SK-N-SH (cell line): ENCODE measurements at regions of chr15 and their contacts with region 1.

Region 1: GRCh38 chr15:68672781-68673205 is 94.0 kb downstream of the CORO2B start:
- DNase-seq: no peak
- H3K4me3 ChIP-seq: no peak overlapping the region
- H3K27ac ChIP-seq: no peak overlapping the region
- H3K4me1 ChIP-seq: no peaks in the 10 kb centered on the region; a peak in 1 of 4 replicates
- H3K27me3 ChIP-seq: no peaks in the 10 kb centered on the region
- CTCF ChIP-seq: peak; percentile 23; the same call in 1 of the 2 replicates
- EP300 ChIP-seq: no peak
- RAD21 ChIP-seq: peak; percentile 60

Region 2: DNA sequence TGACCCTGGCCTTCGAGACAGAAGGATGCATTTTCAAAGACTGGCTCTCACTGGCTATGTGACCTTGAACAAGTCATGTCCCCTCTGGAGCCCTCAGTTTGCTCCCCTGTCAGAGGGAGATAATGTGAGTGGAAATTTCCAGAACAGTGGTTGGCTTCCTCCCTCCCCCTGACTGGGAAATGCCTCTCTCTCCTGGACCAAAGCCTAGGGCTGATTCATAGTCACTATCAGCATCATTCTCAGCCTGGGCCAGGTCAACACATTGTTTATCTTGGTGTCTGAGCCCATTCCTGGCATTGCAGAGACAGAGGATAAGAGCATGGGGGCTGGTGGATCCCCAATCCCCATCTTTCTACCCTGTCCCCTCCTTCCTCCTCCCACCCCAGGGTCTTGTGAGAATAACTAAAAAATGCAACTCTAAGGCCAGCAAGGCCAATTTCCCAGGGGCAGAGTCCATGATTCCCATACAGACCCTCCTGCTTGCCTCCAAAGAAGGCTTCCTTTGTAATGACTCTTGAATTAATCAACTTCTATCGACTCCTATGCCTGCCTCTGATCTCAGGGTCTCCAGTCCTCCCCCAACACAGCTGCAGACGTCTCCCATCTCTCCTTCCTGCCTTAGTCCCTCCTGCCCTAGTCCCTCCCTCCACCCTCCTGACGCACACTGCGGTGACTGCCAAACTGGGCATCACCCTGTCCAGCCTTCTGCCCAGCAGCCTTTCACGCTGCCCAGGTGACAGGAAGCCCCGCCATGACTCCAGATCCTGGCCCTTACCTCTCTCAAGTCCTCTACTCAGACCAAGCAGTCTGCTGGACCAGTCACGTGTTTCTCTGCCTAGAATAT is 129.4 kb before region 1 on chr15:
- CTCF ChIA-PET with region 1: interaction called, 464 read pairs
- POLR2A ChIA-PET with region 1: no interaction called
- DNase-seq: no peak
- H3K4me3 ChIP-seq: no peak overlapping the region
- H3K27ac ChIP-seq: peak overlapping the region in 1 of 2 experiments; percentile 87; a peak in 2 of 4 replicates
- H3K4me1 ChIP-seq: peaks cover 0 to 13% of the 10 kb centered on the region in 2 experiments; a peak in 2 of 4 replicates
- H3K27me3 ChIP-seq: no peaks in the 10 kb centered on the region
- CTCF ChIP-seq: no peak
- EP300 ChIP-seq: peak in 1 of 2 experiments; percentile 84; a peak in 2 of 4 replicates
- RAD21 ChIP-seq: no peak

Region 3: GRCh38 chr15:68578174-68578979 is 94.4 kb before region 1 on chr15:
- CTCF ChIA-PET with region 1: interaction called, 83 read pairs
- POLR2A ChIA-PET with region 1: no interaction called
- DNase-seq: peak; percentile 81
- H3K4me3 ChIP-seq: peak overlapping the region; percentile 52 to 78
- H3K27ac ChIP-seq: no peak overlapping the region
- H3K4me1 ChIP-seq: peaks cover 0 to 12% of the 10 kb centered on the region in 2 experiments; a peak in 1 of 4 replicates
- H3K27me3 ChIP-seq: no peaks in the 10 kb centered on the region
- CTCF ChIP-seq: peak; percentile 58
- EP300 ChIP-seq: no peak
- RAD21 ChIP-seq: peak; percentile 50

Region 4: GRCh38 chr15:68637767-68638404 is 34.9 kb before region 1 on chr15:
- CTCF ChIA-PET with region 1: interaction called, 13 read pairs
- POLR2A ChIA-PET with region 1: no interaction called
- DNase-seq: no peak
- H3K4me3 ChIP-seq: no peak overlapping the region
- H3K27ac ChIP-seq: no peak overlapping the region
- H3K4me1 ChIP-seq: peaks cover 19 to 46% of the 10 kb centered on the region in 2 experiments; a peak in 3 of 4 replicates
- H3K27me3 ChIP-seq: no peaks in the 10 kb centered on the region
- CTCF ChIP-seq: no peak
- EP300 ChIP-seq: no peak
- RAD21 ChIP-seq: no peak

Region 5: DNA sequence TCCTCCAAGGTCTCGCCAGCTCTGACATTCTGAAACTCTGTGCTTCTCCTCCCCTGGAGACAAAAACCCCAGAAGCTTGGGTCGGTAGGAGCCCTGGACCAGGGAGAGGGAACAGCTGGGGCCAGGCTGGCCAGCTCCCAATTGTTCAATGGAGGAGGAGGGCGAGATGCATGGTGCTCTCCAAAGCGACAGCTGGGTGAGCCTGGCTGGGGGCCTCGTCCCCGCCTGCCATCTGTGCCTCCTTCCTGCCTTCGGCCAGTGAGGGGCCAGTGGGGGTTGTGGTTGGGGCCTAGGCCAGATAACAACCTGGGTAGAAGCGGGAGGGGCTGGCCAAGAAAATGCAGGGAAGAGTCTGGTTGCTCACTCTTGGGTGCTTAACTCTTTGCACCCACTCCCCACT is 14.6 kb before region 1 on chr15:
- CTCF ChIA-PET with region 1: interaction called, 36 read pairs
- POLR2A ChIA-PET with region 1: no interaction called
- DNase-seq: no peak
- H3K4me3 ChIP-seq: no peak overlapping the region
- H3K27ac ChIP-seq: no peak overlapping the region
- H3K4me1 ChIP-seq: peaks cover 0 to 2% of the 10 kb centered on the region in 2 experiments; a peak in 1 of 4 replicates
- H3K27me3 ChIP-seq: no peaks in the 10 kb centered on the region
- CTCF ChIP-seq: no peak
- EP300 ChIP-seq: no peak
- RAD21 ChIP-seq: no peak

Region 6: DNA sequence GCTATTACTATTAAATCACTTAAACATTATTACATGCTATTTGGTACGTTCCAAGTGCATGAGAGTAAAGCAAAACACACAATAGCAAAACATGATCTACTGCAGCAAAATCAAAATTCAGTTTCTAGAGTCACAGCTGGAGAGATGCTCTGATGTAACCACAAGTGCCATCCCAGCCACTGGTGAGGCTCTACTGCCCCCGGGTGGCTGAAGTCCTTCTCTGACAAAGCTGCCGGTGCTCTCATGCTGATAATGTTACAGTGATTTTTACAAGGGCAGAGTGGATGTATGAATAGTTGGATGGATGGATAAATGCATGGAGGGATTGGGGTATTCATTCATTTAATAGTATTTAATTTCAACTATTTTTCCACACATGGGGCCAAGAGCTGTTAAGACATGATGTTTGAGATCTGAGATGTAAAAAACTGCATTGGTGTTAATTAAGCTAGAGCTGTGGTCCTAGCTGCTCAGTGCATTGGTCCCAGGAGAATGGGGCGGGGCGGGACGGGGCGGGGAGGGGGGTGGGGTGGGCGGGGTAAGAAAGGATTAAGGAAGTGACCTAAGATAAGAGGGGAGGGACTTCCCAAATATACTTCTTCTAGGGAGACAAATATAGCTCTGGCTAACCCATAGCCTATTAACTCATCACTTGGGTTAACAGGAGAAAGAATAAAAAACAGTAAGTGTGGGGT is 252.2 kb after region 1 on chr15:
- CTCF ChIA-PET with region 1: interaction called, 51 read pairs
- POLR2A ChIA-PET with region 1: no interaction called
- DNase-seq: peak; percentile 86
- H3K4me3 ChIP-seq: peak overlapping the region in 1 of 2 experiments; percentile 24; a peak in 1 of 4 replicates
- H3K27ac ChIP-seq: no peak overlapping the region
- H3K4me1 ChIP-seq: peaks cover 0 to 2% of the 10 kb centered on the region in 2 experiments; a peak in 1 of 4 replicates
- H3K27me3 ChIP-seq: peaks cover 9% of the 10 kb centered on the region; the same call in 1 of the 2 replicates
- CTCF ChIP-seq: peak; percentile 91
- EP300 ChIP-seq: no peak
- RAD21 ChIP-seq: peak; percentile 98